Sigmoid colon (tissue), 7 donors: ENCODE measurements at regions of chr5 and their contacts with region 1.

Region 1: GRCh38 chr5:103151156-103151555 is 31.1 kb downstream of the PPIP5K2 start:
- DNase-seq: no peak
- H3K4me3 ChIP-seq: no peak overlapping the region
- H3K27ac ChIP-seq: no peak overlapping the region
- H3K4me1 ChIP-seq: no peaks in the 10 kb centered on the region
- H3K27me3 ChIP-seq: no peaks in the 10 kb centered on the region
- CTCF ChIP-seq: no peak
- EP300 ChIP-seq: no peak
- POLR2A ChIP-seq: no peak

Region 2: DNA sequence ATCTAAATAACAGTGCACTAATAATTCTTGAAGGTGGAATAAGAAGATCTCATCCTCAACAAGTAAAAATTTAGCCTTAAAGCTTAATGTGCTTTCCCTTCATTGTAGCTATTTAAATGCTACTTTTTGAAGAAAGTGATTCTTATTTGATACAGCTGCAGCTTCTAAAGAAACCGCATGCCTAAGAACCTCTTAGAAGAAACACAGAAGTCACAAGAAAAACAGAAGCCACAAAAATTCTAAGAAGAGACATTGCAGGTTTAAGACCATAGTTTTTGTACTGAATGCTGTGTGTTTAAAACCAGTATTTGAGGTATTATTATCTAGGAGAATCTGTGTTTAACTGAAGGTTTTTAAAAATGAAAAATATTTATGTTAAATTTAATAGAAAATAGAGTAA is 37.3 kb after region 1 on chr5:
- intact Hi-C with region 1: loop called (anchors 5 kb)
- DNase-seq: no peak
- H3K4me3 ChIP-seq: no peak overlapping the region
- H3K27ac ChIP-seq: no peak overlapping the region
- H3K4me1 ChIP-seq: no peaks in the 10 kb centered on the region
- H3K27me3 ChIP-seq: no peaks in the 10 kb centered on the region
- CTCF ChIP-seq: no peak
- EP300 ChIP-seq: no peak
- POLR2A ChIP-seq: no peak

Region 3: GRCh38 chr5:103260951-103261350 is 109.8 kb after region 1 on chr5:
- intact Hi-C with region 1: no loop called
- DNase-seq: no peak
- H3K4me3 ChIP-seq: no peak overlapping the region
- H3K27ac ChIP-seq: no peak overlapping the region
- H3K4me1 ChIP-seq: peaks cover 0 to 37% (median 20%) of the 10 kb centered on the region in 4 donors
- H3K27me3 ChIP-seq: no peaks in the 10 kb centered on the region
- CTCF ChIP-seq: no peak
- EP300 ChIP-seq: no peak
- POLR2A ChIP-seq: no peak